ENCODE measurements at regions of chr7 and their contacts with region 1.

Region 1: DNA sequence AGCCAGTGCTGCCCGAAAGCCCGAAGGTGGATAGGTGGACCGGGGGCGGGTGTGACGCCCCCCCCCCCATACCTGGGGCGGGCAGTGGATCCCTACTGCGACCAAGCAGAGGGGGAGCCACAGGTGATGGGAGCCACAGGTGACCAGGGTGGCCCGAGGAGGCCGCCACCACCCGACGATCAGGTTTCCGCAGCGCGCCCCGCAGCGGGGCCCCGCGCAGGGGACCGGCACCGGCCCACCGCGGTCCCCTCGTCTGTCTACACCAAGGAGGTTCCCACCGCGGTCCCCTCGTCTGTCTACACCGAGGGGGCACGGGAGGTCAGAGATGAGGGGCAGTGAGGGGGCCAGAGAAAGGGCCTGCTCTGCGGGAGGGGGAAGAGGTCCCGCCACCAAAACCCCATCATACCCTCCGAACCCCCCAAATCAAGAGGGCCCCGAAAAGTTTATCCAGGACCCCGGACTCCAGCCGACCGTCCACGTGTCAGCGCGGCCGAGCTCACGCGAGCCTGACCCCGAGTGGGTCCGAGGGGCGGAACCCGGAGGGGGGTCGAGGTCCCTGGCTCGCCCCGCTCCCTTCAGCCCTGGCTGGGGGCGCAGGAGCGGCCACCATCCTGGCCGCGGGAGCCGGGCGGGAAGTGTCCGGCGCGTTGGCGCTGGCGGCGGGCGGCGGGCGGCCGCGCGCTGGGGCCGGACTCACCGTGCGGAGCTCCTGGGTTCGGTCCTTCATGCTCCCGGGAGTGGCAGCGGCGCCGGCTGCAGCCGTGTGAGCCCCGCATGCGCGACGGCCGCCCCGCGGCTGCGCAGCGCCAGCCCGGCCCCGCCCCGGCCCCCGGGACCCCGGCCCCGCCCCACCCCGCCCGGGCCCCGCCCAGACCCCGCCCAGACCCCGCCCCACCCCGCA is at the start of gene STX1A:
- DNase-seq: no peak
- total RNA-seq, gene STX1A: 3.3 TPM

Region 2: DNA sequence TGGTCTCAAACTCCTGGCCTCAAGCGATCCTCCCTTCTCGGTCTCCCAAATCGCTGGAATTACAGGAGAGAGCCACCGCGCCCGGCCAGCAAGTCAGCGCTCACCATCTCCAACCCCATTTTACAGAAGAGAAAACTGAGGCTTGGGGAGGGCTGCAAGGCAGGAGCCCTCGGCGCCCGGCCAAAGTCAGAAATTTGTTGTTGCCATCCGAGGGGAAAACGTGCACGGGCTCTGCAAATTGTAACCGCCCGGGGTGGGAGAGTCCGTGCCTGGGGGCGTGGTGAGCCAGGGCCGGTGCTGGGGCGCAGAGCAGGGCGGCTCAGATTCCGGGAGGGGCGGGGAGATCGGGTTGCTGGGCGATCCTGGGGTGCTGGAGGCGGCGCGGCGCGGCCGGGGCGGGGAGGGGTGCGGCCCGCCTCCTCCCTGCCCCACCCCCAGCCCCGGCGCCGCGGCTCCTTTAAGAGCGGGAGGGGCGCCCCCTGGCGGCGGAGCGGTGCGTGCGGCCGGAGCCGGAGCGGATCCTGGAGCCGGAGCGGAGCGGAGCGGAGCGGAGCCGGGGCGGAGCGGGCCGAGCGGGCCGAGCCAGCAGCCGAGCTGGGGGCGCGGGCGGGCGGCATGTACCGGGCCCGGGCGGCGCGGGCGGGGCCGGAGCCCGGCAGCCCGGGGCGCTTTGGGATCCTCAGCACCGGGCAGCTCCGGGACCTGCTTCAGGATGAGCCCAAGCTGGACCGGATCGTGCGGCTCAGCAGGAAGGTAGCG is 51.6 kb before region 1 on chr7 and contains the start of gene VPS37D:
- intact Hi-C with region 1: loop called (anchors 5 kb)
- DNase-seq: peak; percentile 94
- total RNA-seq, gene VPS37D: 2.4 TPM

Region 3: GRCh38 chr7:73758581-73759138 is 39.5 kb after region 1 on chr7:
- intact Hi-C with region 1: no loop called
- DNase-seq: no peak